ENCODE measurements at regions of chr2 and their contacts with region 1.

Region 1: GRCh38 chr2:113198790-113199612 is 25.2 kb downstream of the PSD4 start:
- DNase-seq: peak; percentile 84
- H3K27ac ChIP-seq: peak overlapping the region; percentile 90
- CTCF ChIP-seq: peak; percentile 96

Region 2: GRCh38 chr2:112941753-112942658 is 257.0 kb before region 1 on chr2:
- CTCF ChIA-PET with region 1: no interaction called
- POLR2A ChIA-PET with region 1: no interaction called
- DNase-seq: peak; percentile 63
- H3K27ac ChIP-seq: peak overlapping the region; percentile 45
- CTCF ChIP-seq: peak; percentile 86

Region 3: DNA sequence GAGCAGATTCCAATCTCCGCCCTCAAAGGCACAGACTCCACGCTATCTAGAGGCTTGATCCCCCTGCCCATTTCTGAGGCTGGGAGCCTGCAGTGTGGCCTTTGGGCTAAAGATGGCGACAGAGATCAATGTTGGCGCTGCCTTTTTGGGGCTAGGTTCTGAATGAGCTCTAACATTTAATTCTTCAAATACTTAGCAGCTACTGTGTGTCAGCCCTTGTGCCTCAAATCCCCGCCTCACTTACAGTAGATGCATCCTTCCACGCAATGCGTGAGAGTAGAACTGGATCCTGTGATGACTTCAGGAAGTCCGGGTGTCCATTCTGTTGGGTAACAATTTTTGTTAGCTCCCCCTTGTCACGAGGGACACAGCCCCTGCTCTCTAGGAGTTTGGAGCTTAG is 118.9 kb before region 1 on chr2:
- CTCF ChIA-PET with region 1: interaction called, 20 read pairs
- POLR2A ChIA-PET with region 1: no interaction called
- DNase-seq: no peak
- H3K27ac ChIP-seq: peak overlapping the region; percentile 81; the same call in 1 of the 2 replicates
- CTCF ChIP-seq: peak; percentile 81

Region 4: DNA sequence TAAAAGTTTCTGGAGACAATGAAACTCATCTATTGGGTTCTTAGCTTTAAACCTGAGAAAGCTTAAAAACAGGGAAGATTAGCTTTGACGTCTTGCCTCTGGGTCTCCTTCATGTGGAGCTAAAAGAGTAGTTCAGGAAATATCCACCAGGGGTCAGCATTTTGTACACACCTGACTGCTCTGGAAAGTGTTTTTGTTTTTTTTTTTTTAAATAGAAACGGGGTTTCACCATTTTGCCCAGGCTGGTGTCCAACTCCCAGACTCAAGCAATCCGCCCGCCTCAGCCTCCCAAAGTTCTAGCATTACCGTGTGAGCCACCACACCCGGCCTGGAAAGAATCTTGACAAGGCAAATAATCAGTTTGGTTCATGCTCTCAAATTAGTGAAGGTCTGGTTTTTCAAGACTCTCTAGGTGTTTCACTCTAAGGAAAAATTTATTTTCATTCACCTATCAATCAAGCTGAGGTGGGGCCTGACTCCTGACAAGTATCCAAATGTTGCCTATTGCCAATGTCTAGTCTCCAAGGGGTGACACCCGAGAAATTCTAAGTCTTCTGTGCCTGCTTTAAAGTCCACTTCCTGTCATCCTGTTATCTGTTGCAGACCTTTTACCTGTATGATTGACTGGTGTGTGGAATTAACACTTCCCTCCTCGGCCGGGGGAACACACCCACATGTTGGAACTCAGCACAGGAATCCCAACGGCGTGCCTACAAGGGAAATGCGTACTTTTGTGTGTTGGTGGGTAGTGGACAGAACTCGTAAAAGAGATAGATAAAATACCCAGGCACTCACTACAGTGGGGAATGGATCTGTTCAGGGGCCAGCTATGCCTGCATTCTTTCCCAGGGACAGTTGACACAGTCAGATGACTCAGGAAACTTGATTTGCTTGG is 60.3 kb before region 1 on chr2:
- CTCF ChIA-PET with region 1: interaction called, 13 read pairs
- POLR2A ChIA-PET with region 1: interaction called, 3 read pairs
- DNase-seq: peak; percentile 68
- H3K27ac ChIP-seq: no peak overlapping the region
- CTCF ChIP-seq: peak; percentile 84

Region 5: GRCh38 chr2:113157118-113157896 is 41.7 kb before region 1 on chr2:
- CTCF ChIA-PET with region 1: interaction called, 11 read pairs
- POLR2A ChIA-PET with region 1: interaction called, 3 read pairs
- DNase-seq: peak; percentile 71
- H3K27ac ChIP-seq: peak overlapping the region; percentile 81
- CTCF ChIP-seq: no peak

Region 6: DNA sequence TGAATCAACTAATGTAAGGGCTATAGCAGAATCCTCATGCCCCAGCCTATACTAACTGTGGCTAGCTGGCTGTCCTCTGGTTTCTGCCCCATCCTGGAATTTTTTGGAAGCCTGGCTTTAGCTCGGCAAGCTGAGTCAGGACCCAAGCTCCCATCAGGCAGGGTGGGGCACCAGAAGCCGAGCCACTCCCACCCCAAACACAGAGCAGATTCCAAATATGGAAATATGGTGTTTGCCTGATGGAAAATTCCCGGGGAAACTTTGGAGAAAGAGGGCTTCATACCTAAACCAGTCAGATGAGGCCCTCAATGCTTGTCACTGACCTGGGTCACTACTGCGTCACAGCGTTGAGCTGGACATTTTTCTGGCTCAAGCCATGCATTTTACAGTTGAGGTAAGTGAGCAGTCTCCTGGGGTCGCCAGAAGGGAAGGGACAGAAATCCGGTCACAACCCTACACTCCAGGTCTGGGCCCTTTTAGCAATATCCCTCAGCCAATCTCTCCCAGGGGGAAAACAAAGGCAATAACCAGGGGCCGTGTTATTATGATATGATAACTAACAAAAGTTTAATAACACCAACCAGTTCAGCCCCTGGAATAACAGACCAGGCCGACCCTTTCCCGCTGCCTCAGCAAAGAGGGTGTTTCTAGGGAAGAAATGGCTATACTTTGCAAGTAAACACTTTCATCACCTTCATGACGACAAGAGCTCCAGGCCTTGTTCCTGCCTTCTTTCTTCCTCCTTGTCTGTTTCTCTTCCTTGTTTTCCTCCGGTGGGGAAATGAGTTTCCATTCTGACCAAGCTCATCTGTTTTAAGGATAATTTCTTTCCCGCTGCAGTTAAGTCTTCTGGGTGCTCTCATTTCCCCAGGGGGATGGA is 12.5 kb after region 1 on chr2:
- CTCF ChIA-PET with region 1: no interaction called
- POLR2A ChIA-PET with region 1: no interaction called
- DNase-seq: peak; percentile 88
- H3K27ac ChIP-seq: peak overlapping the region; percentile 75
- CTCF ChIP-seq: no peak

Measured in RWPE1 (cell line).